HCT116 (cell line): ENCODE measurements at regions of chr14 and their contacts with region 1.

Region 1: DNA sequence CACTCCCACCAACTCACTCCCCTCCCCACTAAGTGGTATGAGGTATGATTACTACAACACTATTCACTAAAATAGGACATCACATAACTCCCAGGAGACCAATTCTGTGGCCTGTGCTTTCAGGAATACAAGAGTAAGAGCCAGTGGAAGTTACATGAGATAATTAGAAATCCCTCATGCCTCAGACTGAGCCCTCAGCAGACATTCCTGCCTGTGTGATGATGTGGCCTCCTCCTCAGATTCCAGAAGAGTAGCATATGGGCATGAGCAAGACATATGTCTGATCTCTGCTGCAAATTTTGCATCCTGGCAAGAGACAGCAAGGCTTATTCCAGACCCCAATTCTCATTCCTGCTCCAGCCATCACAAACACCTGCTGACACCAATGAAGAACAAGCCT is 46.0 kb upstream of the BMP4 start:
- DNase-seq: no peak
- ATAC-seq: no peak
- H3K4me3 ChIP-seq: no peak overlapping the region
- H3K27ac ChIP-seq: no peak overlapping the region
- H3K4me1 ChIP-seq: peaks cover 44 to 46% of the 10 kb centered on the region in 2 experiments
- H3K27me3 ChIP-seq: no peaks in the 10 kb centered on the region
- CTCF ChIP-seq: no peak
- POLR2A ChIP-seq: no peak
- RAD21 ChIP-seq: no peak

Region 2: GRCh38 chr14:53432378-53432802 is 570.3 kb before region 1 on chr14:
- CTCF ChIA-PET with region 1: no interaction called
- POLR2A ChIA-PET with region 1: no interaction called
- RAD21 ChIA-PET with region 1: no interaction called
- intact Hi-C with region 1: loop called (anchors 10 kb)
- DNase-seq: peak; percentile 40
- ATAC-seq: peak; percentile 99
- H3K4me3 ChIP-seq: no peak overlapping the region
- H3K27ac ChIP-seq: peak overlapping the region; percentile 33; the same call in 1 of the 2 replicates
- H3K4me1 ChIP-seq: peaks cover 9 to 24% of the 10 kb centered on the region in 2 experiments; a peak in 3 of 4 replicates
- H3K27me3 ChIP-seq: no peaks in the 10 kb centered on the region
- CTCF ChIP-seq: peak; percentile 43 to 84 (median 66); a peak in 5 of 6 replicates
- POLR2A ChIP-seq: no peak
- RAD21 ChIP-seq: peak; percentile 81

Region 3: GRCh38 chr14:53663709-53664108 is 338.9 kb before region 1 on chr14:
- CTCF ChIA-PET with region 1: interaction called, 4 read pairs
- POLR2A ChIA-PET with region 1: no interaction called
- RAD21 ChIA-PET with region 1: no interaction called
- intact Hi-C with region 1: loop called (anchors 1 kb)
- DNase-seq: peak; percentile 47
- ATAC-seq: peak; percentile 98
- H3K4me3 ChIP-seq: no peak overlapping the region
- H3K27ac ChIP-seq: no peak overlapping the region
- H3K4me1 ChIP-seq: peaks cover 3 to 8% of the 10 kb centered on the region in 2 experiments; a peak in 2 of 4 replicates
- H3K27me3 ChIP-seq: no peaks in the 10 kb centered on the region
- CTCF ChIP-seq: peak; percentile 38 to 63 (median 61); a peak in 5 of 6 replicates
- POLR2A ChIP-seq: no peak
- RAD21 ChIP-seq: peak; percentile 66

Region 4: GRCh38 chr14:53921027-53921426 is 81.6 kb before region 1 on chr14:
- CTCF ChIA-PET with region 1: no interaction called
- POLR2A ChIA-PET with region 1: no interaction called
- RAD21 ChIA-PET with region 1: no interaction called
- intact Hi-C with region 1: no loop called
- DNase-seq: no peak
- ATAC-seq: no peak
- H3K4me3 ChIP-seq: no peak overlapping the region
- H3K27ac ChIP-seq: no peak overlapping the region
- H3K4me1 ChIP-seq: peaks cover 8% of the 10 kb centered on the region in 2 experiments; a peak in 3 of 4 replicates
- H3K27me3 ChIP-seq: no peaks in the 10 kb centered on the region
- CTCF ChIP-seq: no peak
- POLR2A ChIP-seq: no peak
- RAD21 ChIP-seq: no peak

Region 5: DNA sequence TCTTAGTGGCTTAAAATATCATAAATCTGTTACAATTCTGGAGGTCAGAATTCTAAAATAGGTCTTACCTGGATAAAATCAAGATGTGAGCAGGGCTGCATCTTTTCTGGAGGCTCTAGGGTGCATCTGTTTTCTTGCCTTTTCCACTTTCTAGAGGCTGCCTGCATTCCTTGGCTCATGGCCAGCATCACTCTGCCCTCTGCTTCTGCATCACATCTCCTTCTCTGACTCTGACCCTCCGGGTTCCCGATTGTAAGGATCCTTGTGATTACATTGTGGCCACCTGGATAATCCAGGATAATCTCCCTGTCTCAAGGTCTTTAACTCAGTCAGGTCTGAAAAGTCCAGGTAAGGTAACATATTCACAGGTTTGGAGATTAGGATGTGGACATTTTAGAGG is 35.0 kb before region 1 on chr14:
- CTCF ChIA-PET with region 1: no interaction called
- POLR2A ChIA-PET with region 1: no interaction called
- RAD21 ChIA-PET with region 1: no interaction called
- intact Hi-C with region 1: no loop called
- DNase-seq: no peak
- ATAC-seq: no peak
- H3K4me3 ChIP-seq: no peak overlapping the region
- H3K27ac ChIP-seq: no peak overlapping the region
- H3K4me1 ChIP-seq: peaks cover 14 to 16% of the 10 kb centered on the region in 2 experiments; a peak in 3 of 4 replicates
- H3K27me3 ChIP-seq: no peaks in the 10 kb centered on the region
- CTCF ChIP-seq: no peak
- POLR2A ChIP-seq: no peak
- RAD21 ChIP-seq: no peak

Region 6: DNA sequence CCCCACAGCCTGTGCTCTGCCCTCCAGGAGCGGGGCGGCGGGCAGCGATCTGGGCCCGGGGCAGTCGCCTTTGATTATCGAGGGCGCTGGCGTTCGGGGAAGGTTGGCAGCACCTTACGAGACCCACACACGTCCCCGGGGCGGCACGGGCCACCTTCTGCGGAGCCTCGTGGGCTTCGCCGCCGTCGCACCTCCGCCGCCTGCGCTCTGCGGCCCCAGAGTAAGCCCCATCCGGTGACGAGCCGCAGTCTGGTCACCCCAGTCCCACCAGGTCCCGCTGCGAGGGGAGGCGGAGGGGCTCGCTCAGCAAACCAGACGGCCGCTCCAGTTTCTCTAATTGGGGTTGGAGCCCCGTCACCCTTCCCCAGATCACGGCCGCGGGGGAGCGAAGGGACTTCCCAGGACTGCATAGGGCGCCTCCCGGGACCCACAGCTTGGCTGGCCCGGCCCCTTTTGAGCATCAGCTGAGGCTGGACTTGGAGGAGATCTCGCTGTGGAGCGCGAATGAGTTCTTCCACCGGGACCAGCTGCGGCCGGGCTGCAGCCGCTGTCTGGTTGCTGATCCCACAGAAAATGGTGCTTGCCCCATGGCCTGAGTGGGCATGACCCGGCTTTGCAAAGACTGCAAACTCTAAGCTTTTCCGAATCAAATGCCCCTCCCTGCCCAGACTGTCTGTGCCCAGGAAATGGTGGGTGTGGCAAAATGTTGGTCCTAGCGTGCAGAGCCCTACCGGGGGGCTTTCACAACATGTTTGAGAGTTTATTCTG is 1127.0 kb after region 1 on chr14:
- CTCF ChIA-PET with region 1: no interaction called
- POLR2A ChIA-PET with region 1: no interaction called
- RAD21 ChIA-PET with region 1: no interaction called
- intact Hi-C with region 1: no loop called
- DNase-seq: no peak
- ATAC-seq: peak; percentile 73
- H3K4me3 ChIP-seq: peak overlapping the region; percentile 74 to 80
- H3K27ac ChIP-seq: peak overlapping the region; percentile 79
- H3K4me1 ChIP-seq: peaks cover 30 to 61% of the 10 kb centered on the region in 2 experiments
- H3K27me3 ChIP-seq: no peaks in the 10 kb centered on the region
- CTCF ChIP-seq: no peak
- POLR2A ChIP-seq: no peak
- RAD21 ChIP-seq: no peak